ENCODE measurements at regions of chr4 and their contacts with region 1.

Region 1: GRCh38 chr4:24557026-24558025 is 27.0 kb downstream of the DHX15 start:
- DNase-seq: no peak
- ATAC-seq: peak; percentile 54
- H3K4me3 Mint-ChIP-seq: peak overlapping the region; percentile 23
- H3K27ac Mint-ChIP-seq: peak overlapping the region; percentile 34
- H3K4me1 Mint-ChIP-seq: peaks cover 49% of the 10 kb centered on the region
- H3K27me3 Mint-ChIP-seq: no peaks in the 10 kb centered on the region

Region 2: GRCh38 chr4:24584175-24584850 is 27.0 kb after region 1 on chr4 and contains the start of gene DHX15:
- CTCF ChIA-PET with region 1: interaction called, 4 read pairs
- POLR2A ChIA-PET with region 1: interaction called, 13 read pairs
- DNase-seq: peak; percentile 95
- ATAC-seq: peak; percentile 95
- H3K4me3 Mint-ChIP-seq: peak within 1 kb of the TSS; percentile 96
- H3K27ac Mint-ChIP-seq: peak within 1 kb of the TSS; percentile 97
- H3K4me1 Mint-ChIP-seq: peaks cover 38% of the 10 kb centered on the region
- H3K27me3 Mint-ChIP-seq: no peaks in the 10 kb centered on the region
- total RNA-seq, gene DHX15: 193 to 198 TPM

Measured in activated CD8-positive, alpha-beta T cell treated with anti-CD3 and anti-CD28 coated beads, Interleukin-2, amount 10 ng/mL, durations not matched to agents 7 days and 5 days (primary cell).